Naive thymus-derived CD4-positive, alpha-beta T cell (primary cell): ENCODE measurements at regions of chr18 and their contacts with region 1.

Region 1: GRCh38 chr18:3297025-3297984 is 35.4 kb downstream of the MYL12B start:
- DNase-seq: peak; percentile 74 to 93 (median 90)
- ATAC-seq: peak; percentile 100
- H3K4me3 ChIP-seq: peak overlapping the region; percentile 60
- H3K4me3 Mint-ChIP-seq: peak overlapping the region; percentile 89 to 98 (median 95)
- H3K27ac ChIP-seq: peak overlapping the region; percentile 62
- H3K27ac Mint-ChIP-seq: peak overlapping the region; percentile 21 to 93 (median 84)
- H3K4me1 ChIP-seq: peaks cover 6 to 9% of the 10 kb centered on the region in 2 donors
- H3K4me1 Mint-ChIP-seq: peaks cover 0 to 16% (median 10%) of the 10 kb centered on the region in 7 donors
- H3K27me3 ChIP-seq: no peaks in the 10 kb centered on the region
- H3K27me3 Mint-ChIP-seq: peaks cover 13 to 41% (median 30%) of the 10 kb centered on the region in 5 donors

Region 2: GRCh38 chr18:2958819-2959298 is 338.4 kb before region 1 on chr18:
- CTCF ChIA-PET with region 1: no interaction called
- POLR2A ChIA-PET with region 1: no interaction called
- intact Hi-C with region 1: no loop called
- DNase-seq: peak in 1 of 9 donors; percentile 61
- ATAC-seq: no peak
- H3K4me3 ChIP-seq: peak overlapping the region; percentile 8
- H3K4me3 Mint-ChIP-seq: peak overlapping the region; percentile 1 to 85 (median 66)
- H3K27ac ChIP-seq: peak overlapping the region; percentile 68
- H3K27ac Mint-ChIP-seq: peak overlapping the region; percentile 96 to 100 (median 99)
- H3K4me1 ChIP-seq: peaks cover 83 to 85% of the 10 kb centered on the region in 2 donors
- H3K4me1 Mint-ChIP-seq: peaks cover 46 to 97% (median 93%) of the 10 kb centered on the region in 7 donors
- H3K27me3 ChIP-seq: no peaks in the 10 kb centered on the region
- H3K27me3 Mint-ChIP-seq: no peaks in the 10 kb centered on the region

Region 3: GRCh38 chr18:3261371-3262246 is 35.7 kb before region 1 on chr18 and contains the start of gene MYL12B:
- CTCF ChIA-PET with region 1: interaction called, 3 read pairs
- POLR2A ChIA-PET with region 1: interaction called, 8 read pairs
- intact Hi-C with region 1: loop called (anchors 1 kb)
- DNase-seq: peak; percentile 72 to 88 (median 84)
- ATAC-seq: peak; percentile 87
- H3K4me3 ChIP-seq: peak within 1 kb of the TSS; percentile 81
- H3K4me3 Mint-ChIP-seq: peak within 1 kb of the TSS; percentile 87 to 100 (median 96)
- H3K27ac ChIP-seq: peak within 1 kb of the TSS; percentile 96
- H3K27ac Mint-ChIP-seq: peak within 1 kb of the TSS; percentile 95 to 100 (median 99)
- H3K4me1 ChIP-seq: peaks cover 54 to 66% of the 10 kb centered on the region in 2 donors
- H3K4me1 Mint-ChIP-seq: peaks cover 48 to 87% (median 83%) of the 10 kb centered on the region in 7 donors
- H3K27me3 ChIP-seq: no peaks in the 10 kb centered on the region
- H3K27me3 Mint-ChIP-seq: no peaks in the 10 kb centered on the region
- total RNA-seq, gene MYL12B: 140 to 300 (median 169) TPM

Region 4: DNA sequence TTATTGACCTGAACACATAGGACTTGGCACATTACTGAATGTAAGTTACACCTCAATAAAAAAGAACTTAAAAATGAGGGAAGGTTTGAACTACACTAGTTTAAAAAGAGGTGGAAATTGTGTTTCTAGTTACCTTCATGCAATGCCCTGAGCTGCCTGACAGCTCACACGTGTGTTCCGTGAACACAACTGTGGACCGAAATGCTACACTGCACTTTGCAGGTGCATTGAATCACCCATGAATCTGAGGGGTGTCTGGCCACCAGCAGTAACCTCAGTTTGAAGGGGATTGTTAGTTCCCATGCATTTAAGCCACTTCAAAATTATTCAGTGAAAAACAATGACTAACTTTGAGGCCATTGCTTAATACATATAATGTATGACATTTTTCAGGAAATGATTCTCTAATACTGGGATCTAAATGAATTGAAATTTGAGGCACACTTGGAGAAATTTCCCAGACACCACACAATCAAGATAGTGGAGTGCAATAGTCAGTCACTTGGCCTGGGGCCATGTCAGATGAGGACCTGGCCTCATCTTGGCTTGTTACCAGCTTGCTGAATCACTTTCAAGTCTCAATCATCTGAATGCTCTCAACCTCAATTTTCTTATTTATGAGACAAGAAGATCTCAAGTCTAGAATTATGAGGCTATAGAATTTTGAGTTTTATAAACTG is 24.0 kb after region 1 on chr18:
- CTCF ChIA-PET with region 1: no interaction called
- POLR2A ChIA-PET with region 1: no interaction called
- intact Hi-C with region 1: loop called in 1 of 2 experiments (anchors 1 kb)
- DNase-seq: no peak
- ATAC-seq: no peak
- H3K4me3 ChIP-seq: no peak overlapping the region
- H3K4me3 Mint-ChIP-seq: no peak overlapping the region
- H3K27ac ChIP-seq: no peak overlapping the region
- H3K27ac Mint-ChIP-seq: no peak overlapping the region
- H3K4me1 ChIP-seq: no peaks in the 10 kb centered on the region
- H3K4me1 Mint-ChIP-seq: peaks cover 0 to 8% (median 0%) of the 10 kb centered on the region in 7 donors
- H3K27me3 ChIP-seq: no peaks in the 10 kb centered on the region
- H3K27me3 Mint-ChIP-seq: peaks cover 4 to 13% (median 6%) of the 10 kb centered on the region in 5 donors

Region 5: DNA sequence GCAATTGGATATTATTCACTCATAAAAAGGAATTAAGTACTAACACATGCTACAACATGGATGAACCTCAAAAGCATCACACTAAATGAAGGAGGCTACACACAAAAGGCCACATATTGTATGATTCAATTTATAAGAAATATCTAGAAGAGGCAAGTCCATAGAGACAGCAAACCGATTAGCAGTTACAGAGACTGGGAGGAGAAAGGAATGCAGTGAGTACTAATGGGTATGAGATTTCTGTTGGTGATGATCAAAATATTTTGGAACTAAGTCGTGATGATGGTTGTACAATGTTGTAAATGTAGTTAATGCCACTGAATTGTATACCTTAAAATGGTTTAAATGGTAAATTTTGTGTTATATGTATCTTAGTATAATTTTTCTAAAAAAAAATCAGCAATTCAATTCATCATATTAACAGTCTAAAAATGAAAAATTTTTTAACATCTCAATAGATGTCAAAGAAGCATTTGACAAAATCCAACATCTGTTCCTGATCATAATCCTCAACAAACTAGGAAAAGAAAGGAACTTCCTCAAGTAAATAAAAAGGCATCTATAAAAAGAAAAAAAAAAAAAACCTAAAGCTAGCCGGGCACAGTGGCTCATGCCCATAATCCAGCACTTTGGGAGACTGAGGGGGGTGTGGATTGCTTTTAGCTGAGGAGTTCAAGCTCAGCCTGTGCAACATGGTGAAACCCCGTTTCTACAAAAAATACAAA is 250.7 kb after region 1 on chr18:
- CTCF ChIA-PET with region 1: no interaction called
- POLR2A ChIA-PET with region 1: no interaction called
- intact Hi-C with region 1: no loop called
- DNase-seq: no peak
- ATAC-seq: no peak
- H3K4me3 ChIP-seq: no peak overlapping the region
- H3K4me3 Mint-ChIP-seq: no peak overlapping the region
- H3K27ac ChIP-seq: no peak overlapping the region
- H3K27ac Mint-ChIP-seq: no peak overlapping the region
- H3K4me1 ChIP-seq: no peaks in the 10 kb centered on the region
- H3K4me1 Mint-ChIP-seq: no peaks in the 10 kb centered on the region
- H3K27me3 ChIP-seq: no peaks in the 10 kb centered on the region
- H3K27me3 Mint-ChIP-seq: no peaks in the 10 kb centered on the region

Region 6: DNA sequence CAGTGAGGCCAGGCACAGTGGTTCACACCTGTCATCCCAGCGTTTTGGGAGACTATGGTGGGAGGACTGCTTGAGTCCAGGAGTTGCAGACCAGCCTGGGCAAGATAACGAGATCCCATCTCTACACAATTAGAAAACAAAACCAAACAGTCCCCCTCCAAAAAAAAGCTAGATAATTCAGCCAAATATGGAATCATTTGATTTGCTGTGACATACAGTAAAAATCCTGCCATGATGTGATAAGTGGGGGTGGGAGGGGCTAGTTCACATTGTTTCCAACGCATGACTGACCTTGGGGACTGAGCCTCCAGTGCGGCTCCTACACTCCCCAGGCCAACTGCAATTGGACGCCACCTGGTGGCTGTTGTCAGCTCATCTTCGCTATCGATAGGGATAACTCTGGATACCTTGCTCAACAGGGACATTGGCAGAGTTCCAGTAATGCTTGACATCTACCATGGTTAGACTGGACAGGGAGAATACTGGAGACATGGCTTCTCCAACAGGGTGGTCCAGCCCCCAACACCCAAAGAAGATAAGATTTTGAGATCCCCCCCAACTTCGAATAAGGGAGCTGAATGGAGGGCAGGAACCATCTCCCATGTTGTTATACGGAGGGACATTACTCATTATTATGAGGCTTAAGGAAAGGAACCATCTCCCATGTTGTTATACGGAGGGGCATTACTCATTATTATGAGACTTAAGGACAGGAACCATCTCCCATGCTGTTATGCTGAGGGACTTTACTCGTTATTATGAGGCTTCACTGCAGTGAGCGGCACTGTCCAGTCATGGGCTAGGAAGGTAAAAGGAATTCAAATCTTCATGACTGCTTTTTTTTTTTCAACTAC is 288.6 kb after region 1 on chr18:
- CTCF ChIA-PET with region 1: interaction called, 5 read pairs
- POLR2A ChIA-PET with region 1: no interaction called
- intact Hi-C with region 1: loop called in 1 of 2 experiments (anchors 1 kb)
- DNase-seq: peak in 8 of 9 donors; percentile 40 to 60 (median 48)
- ATAC-seq: peak; percentile 90
- H3K4me3 ChIP-seq: no peak overlapping the region
- H3K4me3 Mint-ChIP-seq: peak overlapping the region in 3 of 10 donors; percentile 4 to 34 (median 16)
- H3K27ac ChIP-seq: no peak overlapping the region
- H3K27ac Mint-ChIP-seq: peak overlapping the region in 7 of 9 donors; percentile 28 to 93 (median 65)
- H3K4me1 ChIP-seq: no peaks in the 10 kb centered on the region
- H3K4me1 Mint-ChIP-seq: peaks cover 0 to 29% (median 11%) of the 10 kb centered on the region in 7 donors
- H3K27me3 ChIP-seq: no peaks in the 10 kb centered on the region
- H3K27me3 Mint-ChIP-seq: no peaks in the 10 kb centered on the region

Region 7: DNA sequence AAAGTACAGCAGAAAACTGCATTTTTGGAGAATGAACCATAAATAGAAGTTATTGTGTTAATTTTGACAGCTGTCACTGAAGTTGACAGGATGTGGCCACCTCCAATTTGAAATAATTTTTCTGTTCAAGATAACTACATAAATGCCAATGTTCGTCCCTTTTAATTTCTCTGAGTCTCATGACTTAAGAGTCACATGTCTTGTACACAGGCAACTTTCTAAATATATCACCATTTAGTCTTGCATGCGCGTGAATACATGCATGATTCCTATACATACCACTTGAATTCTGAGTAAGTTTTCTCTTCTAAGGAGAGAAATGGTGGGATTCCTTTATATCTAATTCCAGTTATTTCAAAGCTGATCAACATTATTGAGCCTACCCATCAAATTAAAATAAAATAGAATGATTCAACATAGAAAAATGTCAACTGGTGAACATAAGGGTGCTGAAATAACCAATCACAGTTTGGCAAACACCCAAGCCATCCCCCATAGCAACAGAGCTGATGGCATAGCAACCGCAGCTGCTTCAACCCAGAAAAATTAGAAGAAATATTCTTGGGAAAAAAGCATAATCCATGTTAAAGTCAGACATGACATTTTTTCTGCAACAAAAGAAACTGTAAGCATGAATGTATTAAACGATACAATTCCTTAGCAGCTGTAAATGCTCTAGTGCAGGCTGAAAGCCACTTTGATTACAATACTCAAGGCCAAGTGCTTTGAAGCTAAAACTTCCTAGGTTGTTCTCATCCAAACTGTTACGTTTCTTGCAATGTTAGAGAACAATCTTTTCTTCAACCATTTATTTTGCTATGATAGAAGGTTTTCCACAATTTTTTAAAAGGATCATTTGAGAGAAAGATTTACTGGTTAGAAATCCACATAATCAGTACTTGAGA is 875.1 kb after region 1 on chr18:
- CTCF ChIA-PET with region 1: no interaction called
- POLR2A ChIA-PET with region 1: no interaction called
- intact Hi-C with region 1: no loop called
- DNase-seq: no peak
- ATAC-seq: no peak
- H3K4me3 ChIP-seq: no peak overlapping the region
- H3K4me3 Mint-ChIP-seq: no peak overlapping the region
- H3K27ac ChIP-seq: no peak overlapping the region
- H3K27ac Mint-ChIP-seq: no peak overlapping the region
- H3K4me1 ChIP-seq: no peaks in the 10 kb centered on the region
- H3K4me1 Mint-ChIP-seq: no peaks in the 10 kb centered on the region
- H3K27me3 ChIP-seq: no peaks in the 10 kb centered on the region
- H3K27me3 Mint-ChIP-seq: no peaks in the 10 kb centered on the region